GM12878 (cell line): ENCODE measurements at regions of chr11 and their contacts with region 1.

Region 1: DNA sequence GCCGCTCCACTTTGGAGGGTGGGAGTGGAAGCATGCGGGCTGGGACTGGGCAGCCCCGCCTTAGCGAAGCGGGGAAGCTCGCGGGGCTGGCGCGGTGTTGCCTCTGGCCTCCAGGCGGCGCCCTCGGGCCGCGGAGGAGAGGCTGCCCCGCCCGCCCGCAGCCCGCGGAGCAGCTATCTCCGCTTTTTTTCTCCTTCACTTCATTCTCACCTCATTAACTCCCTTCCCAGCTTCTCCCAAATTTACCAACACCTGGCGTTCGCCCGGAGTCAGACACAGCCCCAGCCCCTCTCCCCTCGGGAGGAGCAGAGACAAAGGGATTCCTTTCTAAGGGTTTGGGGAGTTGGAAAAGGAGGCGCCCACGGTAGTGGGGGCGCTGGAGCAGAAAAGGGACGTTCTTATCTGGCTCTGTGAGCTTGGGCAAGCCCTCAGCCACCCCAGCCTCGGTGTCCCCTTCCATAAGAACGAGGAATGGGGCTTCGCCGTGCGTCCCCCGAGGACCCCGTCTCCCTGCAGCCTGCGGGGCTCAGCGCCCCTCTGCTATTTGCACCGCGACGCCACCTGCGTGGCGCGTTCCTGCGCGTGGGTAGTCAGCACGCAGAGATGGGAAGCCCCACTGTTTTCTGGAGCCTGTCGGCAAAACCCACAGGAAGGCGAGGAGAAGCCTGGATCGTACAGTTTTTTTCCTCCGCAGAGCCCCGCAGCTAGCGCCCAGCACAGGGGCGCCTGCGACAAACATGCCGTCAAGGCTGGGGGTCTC is 1.5 kb upstream of the WNT11 start:
- DNase-seq: no peak
- ATAC-seq: peak; percentile 83
- H3K4me3 ChIP-seq: peak overlapping the region; percentile 56
- H3K27ac ChIP-seq: no peak overlapping the region
- H3K4me1 ChIP-seq: peaks cover 17% of the 10 kb centered on the region
- H3K27me3 ChIP-seq: peaks cover 33 to 49% of the 10 kb centered on the region in 2 experiments
- CTCF ChIP-seq: peak; percentile 94 to 98 (median 94); a peak in 5 of 6 replicates
- EP300 ChIP-seq: no peak
- POLR2A ChIP-seq: no peak
- RAD21 ChIP-seq: peak; percentile 83

Region 2: DNA sequence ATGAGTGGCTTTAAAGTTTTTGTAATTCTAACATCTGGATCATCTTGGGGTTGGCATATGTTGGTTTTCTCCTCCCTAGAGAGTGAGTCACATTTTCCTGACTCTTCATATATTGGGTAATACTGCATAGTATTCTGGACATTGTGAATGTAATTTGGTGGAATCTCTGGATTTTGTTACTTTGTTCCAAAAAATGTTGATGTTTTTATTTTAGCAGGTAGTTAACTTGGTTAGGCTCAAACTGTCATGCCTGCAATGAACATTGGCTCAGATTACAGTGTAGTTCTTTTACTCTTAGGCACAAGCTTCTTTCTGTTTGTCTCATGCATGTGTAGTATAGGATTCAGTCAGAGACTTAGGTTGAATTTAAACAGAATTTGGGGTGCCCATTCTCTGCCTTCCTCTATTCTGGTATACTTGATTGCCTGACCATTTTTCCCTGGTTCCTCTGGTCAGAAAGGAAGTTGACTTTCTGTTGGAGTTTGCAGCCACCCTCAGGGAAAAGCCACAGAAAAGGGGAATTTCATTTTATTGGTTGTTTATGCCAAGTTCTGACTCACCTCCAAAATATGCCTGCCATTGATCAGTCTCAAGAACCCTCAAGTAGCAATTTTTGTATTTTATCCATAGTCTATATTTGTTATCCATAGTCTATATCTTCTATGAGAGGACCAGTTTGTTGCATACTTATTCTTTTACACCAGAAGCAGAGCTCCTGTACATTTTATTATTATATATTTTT is 241.1 kb before region 1 on chr11:
- CTCF ChIA-PET with region 1: no interaction called
- POLR2A ChIA-PET with region 1: no interaction called
- RAD21 ChIA-PET with region 1: no interaction called
- SMC1A ChIA-PET with region 1: no interaction called
- in situ Hi-C with region 1: no loop called
- intact Hi-C with region 1: no loop called
- DNase-seq: no peak
- ATAC-seq: peak; percentile 59
- H3K4me3 ChIP-seq: no peak overlapping the region
- H3K27ac ChIP-seq: no peak overlapping the region
- H3K4me1 ChIP-seq: peaks cover 4% of the 10 kb centered on the region
- H3K27me3 ChIP-seq: no peaks in the 10 kb centered on the region
- CTCF ChIP-seq: no peak
- EP300 ChIP-seq: no peak
- POLR2A ChIP-seq: no peak
- RAD21 ChIP-seq: no peak

Region 3: GRCh38 chr11:76166314-76166713 is 41.5 kb before region 1 on chr11:
- CTCF ChIA-PET with region 1: no interaction called
- POLR2A ChIA-PET with region 1: no interaction called
- RAD21 ChIA-PET with region 1: no interaction called
- SMC1A ChIA-PET with region 1: no interaction called
- in situ Hi-C with region 1: no loop called
- intact Hi-C with region 1: loop called (anchors 5 kb)
- DNase-seq: peak; percentile 54
- ATAC-seq: peak; percentile 77
- H3K4me3 ChIP-seq: no peak overlapping the region
- H3K27ac ChIP-seq: no peak overlapping the region
- H3K4me1 ChIP-seq: peaks cover 17% of the 10 kb centered on the region
- H3K27me3 ChIP-seq: no peaks in the 10 kb centered on the region
- CTCF ChIP-seq: no peak
- EP300 ChIP-seq: peak; percentile 37 to 57; a peak in 2 of 4 replicates
- POLR2A ChIP-seq: no peak
- RAD21 ChIP-seq: no peak

Region 4: GRCh38 chr11:76293189-76293631 is 85.4 kb after region 1 on chr11:
- CTCF ChIA-PET with region 1: interaction called, 18 read pairs
- POLR2A ChIA-PET with region 1: no interaction called
- RAD21 ChIA-PET with region 1: interaction called, 5 read pairs
- SMC1A ChIA-PET with region 1: interaction called, 10 read pairs
- in situ Hi-C with region 1: no loop called
- intact Hi-C with region 1: loop called (anchors 5 kb)
- DNase-seq: peak; percentile 71
- ATAC-seq: peak; percentile 78
- H3K4me3 ChIP-seq: peak overlapping the region; percentile 38; the same call in 1 of the 2 replicates
- H3K27ac ChIP-seq: no peak overlapping the region
- H3K4me1 ChIP-seq: peaks cover 31% of the 10 kb centered on the region
- H3K27me3 ChIP-seq: no peaks in the 10 kb centered on the region; a peak in 2 of 4 replicates
- CTCF ChIP-seq: no peak
- EP300 ChIP-seq: no peak; a peak in 1 of 4 replicates
- POLR2A ChIP-seq: no peak
- RAD21 ChIP-seq: no peak

Region 5: DNA sequence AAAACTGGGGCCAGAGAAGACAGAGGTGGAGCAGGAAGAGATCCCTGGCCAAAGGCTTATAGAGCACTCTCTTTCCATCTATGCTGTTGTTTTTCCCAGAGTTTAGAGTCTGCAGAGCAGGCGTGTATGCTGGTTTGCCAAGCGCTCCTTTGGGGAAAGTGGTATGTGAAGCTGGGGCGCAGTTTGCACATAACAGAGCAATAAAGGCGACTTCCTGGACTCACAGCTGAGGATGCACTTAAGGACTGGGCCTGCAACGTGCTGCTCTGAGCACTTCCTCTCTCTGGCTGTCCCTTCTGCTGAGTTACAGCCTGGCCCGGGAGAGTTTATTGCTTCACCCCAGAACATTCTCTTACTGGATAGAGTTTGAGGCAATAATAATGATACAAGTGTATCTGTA is 131.4 kb after region 1 on chr11:
- CTCF ChIA-PET with region 1: interaction called, 10 read pairs
- POLR2A ChIA-PET with region 1: no interaction called
- RAD21 ChIA-PET with region 1: no interaction called
- SMC1A ChIA-PET with region 1: interaction called, 4 read pairs
- in situ Hi-C with region 1: no loop called
- intact Hi-C with region 1: no loop called
- DNase-seq: no peak
- ATAC-seq: peak; percentile 38; the same call in 1 of the 3 replicates
- H3K4me3 ChIP-seq: no peak overlapping the region
- H3K27ac ChIP-seq: no peak overlapping the region
- H3K4me1 ChIP-seq: no peaks in the 10 kb centered on the region
- H3K27me3 ChIP-seq: no peaks in the 10 kb centered on the region
- CTCF ChIP-seq: no peak
- EP300 ChIP-seq: no peak
- POLR2A ChIP-seq: no peak
- RAD21 ChIP-seq: no peak

Region 6: DNA sequence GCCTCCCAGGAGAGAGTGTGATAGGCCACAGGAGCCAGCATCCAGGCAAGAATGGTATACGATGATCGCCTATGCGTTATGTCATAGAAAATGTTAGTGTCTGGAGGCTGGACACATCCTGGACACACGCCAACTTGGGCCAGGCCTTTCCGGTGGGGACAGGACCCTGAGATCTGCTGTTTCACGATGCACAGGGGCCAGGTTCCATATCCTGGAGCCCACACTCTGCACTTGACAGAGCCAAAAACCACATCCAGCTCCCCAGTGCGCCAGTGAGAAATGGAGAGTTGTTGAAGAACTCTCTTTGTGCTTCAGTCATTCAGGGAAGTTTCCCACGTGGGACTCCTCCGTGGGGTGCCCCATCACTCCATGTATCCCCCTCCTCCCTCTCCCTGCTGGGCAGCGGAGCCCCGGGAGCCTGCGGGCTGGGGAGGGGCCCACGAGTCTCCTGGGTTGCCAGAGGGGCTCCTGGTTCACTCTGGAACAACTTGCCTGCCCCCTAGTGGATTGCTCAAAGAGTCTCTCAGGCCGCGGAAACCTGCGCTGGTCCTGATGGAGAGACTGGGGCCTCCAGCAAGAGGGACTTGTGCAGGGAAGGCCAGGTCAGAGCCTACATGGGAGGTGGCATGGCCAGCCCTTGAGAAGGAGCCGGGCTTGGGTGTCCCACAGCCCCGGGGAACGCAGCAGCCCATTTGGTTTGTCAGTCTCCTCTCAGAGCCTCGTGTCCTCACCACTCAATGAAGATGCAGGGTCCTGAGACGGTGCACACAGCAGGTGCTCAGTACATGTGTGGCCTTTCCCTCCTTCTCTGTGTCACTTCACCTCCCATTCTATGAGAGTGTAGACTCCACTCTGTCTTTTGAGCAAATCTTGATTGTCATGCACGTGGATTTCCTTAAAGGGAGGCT is 472.9 kb after region 1 on chr11:
- CTCF ChIA-PET with region 1: interaction called, 3 read pairs
- POLR2A ChIA-PET with region 1: no interaction called
- RAD21 ChIA-PET with region 1: interaction called, 4 read pairs
- SMC1A ChIA-PET with region 1: no interaction called
- in situ Hi-C with region 1: no loop called
- intact Hi-C with region 1: loop called (anchors 5 kb)
- DNase-seq: no peak
- ATAC-seq: peak; percentile 91
- H3K4me3 ChIP-seq: no peak overlapping the region
- H3K27ac ChIP-seq: no peak overlapping the region
- H3K4me1 ChIP-seq: peaks cover 7% of the 10 kb centered on the region
- H3K27me3 ChIP-seq: no peaks in the 10 kb centered on the region; a peak in 1 of 4 replicates
- CTCF ChIP-seq: peak; percentile 71 to 92 (median 87); a peak in 5 of 6 replicates
- EP300 ChIP-seq: no peak
- POLR2A ChIP-seq: no peak
- RAD21 ChIP-seq: peak; percentile 92